Panc1 (cell line): ENCODE measurements at regions of chr1 and their contacts with region 1.

Region 1: DNA sequence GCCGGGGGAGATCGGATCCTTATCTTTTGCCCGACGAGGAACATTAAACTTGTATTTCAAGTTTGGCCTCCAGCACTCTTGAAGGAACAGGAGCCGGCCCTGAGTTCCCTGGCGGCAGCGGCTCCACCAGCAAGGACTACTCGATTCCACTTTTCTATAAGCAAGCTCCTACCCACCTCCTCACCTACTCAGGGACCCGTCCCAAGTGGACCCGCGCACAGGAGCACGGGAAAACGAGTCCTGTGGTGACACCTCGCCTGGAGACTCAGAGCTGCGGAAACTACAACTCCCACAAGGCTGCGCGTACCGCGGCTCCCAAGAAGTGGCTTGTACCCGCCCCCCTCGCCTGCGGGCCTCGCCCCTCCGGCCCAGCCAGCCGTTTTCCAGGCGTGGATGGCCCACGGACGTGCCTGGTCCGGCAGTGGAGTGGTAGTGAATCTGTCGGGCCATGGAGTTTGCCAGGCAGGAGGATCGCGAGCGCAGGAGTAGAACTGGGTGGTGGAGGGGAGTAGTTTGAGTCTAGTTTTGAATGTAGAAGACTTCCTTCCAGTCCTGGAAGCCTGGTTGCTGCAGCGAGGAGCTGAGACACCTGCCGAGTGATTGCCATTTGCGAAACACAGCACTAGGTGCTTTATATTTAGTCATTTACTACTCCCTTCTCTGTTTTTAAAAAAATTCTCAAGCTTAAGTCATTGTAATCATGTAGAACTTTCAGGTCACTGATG is at the start of gene ACP6:
- DNase-seq: peak; percentile 86
- ATAC-seq: peak; percentile 99
- H3K4me3 ChIP-seq: peak within 1 kb of the TSS; percentile 90 to 92
- H3K27ac ChIP-seq: peak within 1 kb of the TSS; percentile 88
- H3K4me1 ChIP-seq: peaks cover 8% of the 10 kb centered on the region; the same call in 1 of the 2 replicates
- H3K27me3 ChIP-seq: no peaks in the 10 kb centered on the region
- CTCF ChIP-seq: no peak
- total RNA-seq, gene ACP6: 12.0 TPM

Region 2: GRCh38 chr1:147541672-147542568 is 128.6 kb before region 1 on chr1:
- CTCF ChIA-PET with region 1: interaction called, 10 read pairs
- POLR2A ChIA-PET with region 1: no interaction called
- in situ Hi-C with region 1: no loop called
- intact Hi-C with region 1: no loop called
- DNase-seq: no peak
- ATAC-seq: peak; percentile 85
- H3K4me3 ChIP-seq: peak overlapping the region; percentile 51 to 83
- H3K27ac ChIP-seq: peak overlapping the region; percentile 92
- H3K4me1 ChIP-seq: peaks cover 31% of the 10 kb centered on the region
- H3K27me3 ChIP-seq: no peaks in the 10 kb centered on the region
- CTCF ChIP-seq: no peak